ENCODE measurements at regions of chr19 and their contacts with region 1.

Region 1: DNA sequence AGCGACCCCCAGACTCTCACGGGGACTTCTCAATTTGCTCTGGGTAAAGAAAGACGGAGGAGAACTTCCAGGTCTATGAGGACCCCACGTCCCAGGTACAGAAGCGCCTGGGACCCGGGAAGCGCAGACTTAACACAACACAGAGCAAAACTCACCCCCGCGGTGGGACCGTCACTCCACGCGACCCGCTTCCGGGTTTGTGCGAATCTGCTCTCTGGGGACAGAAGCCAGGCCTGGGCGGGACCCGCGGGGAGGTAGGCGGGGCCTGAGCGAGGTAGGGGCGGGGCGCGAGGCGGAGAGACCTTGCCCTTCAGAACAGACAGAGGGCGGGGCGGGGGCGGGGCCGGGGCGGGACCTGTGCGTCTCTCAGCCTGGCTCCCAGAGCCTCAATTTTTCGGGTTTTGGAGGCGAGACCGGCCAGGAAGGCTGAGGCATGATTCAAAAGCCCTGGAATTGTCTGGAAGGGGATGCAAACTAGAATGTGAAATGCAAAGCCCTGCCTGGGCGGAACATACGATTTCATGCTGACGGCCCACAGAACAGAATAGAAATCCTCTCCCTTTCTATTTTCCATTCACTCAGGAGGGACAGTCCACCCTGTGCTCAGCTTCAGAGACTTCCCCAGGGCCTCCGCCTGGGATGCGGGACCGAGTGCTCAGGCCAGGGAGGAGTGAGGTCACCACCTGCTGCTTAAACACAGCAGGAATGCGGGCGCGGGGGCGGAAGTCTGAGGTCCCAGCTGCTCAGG is 19.3 kb upstream of the ZNF888 start:
- DNase-seq: peak; percentile 79
- H3K4me3 ChIP-seq: peak overlapping the region; percentile 67 to 86 (median 76)
- H3K27ac ChIP-seq: peak overlapping the region; percentile 58
- H3K4me1 ChIP-seq: peaks cover 10% of the 10 kb centered on the region
- H3K27me3 ChIP-seq: no peaks in the 10 kb centered on the region
- CTCF ChIP-seq: no peak

Region 2: GRCh38 chr19:52853880-52854279 is 88.7 kb before region 1 on chr19:
- CTCF ChIA-PET with region 1: no interaction called
- dilution Hi-C with region 1: no loop called
- in situ Hi-C with region 1: no loop called
- intact Hi-C with region 1: loop called (anchors 1 kb)
- DNase-seq: no peak
- H3K4me3 ChIP-seq: no peak overlapping the region
- H3K27ac ChIP-seq: no peak overlapping the region
- H3K4me1 ChIP-seq: peaks cover 3% of the 10 kb centered on the region
- H3K27me3 ChIP-seq: no peaks in the 10 kb centered on the region
- CTCF ChIP-seq: no peak

Region 3: GRCh38 chr19:52897144-52897935 is 45.2 kb before region 1 on chr19 and contains the start of gene ZNF320:
- CTCF ChIA-PET with region 1: no interaction called
- dilution Hi-C with region 1: no loop called
- in situ Hi-C with region 1: no loop called
- intact Hi-C with region 1: loop called (anchors 2 kb)
- DNase-seq: peak; percentile 88
- H3K4me3 ChIP-seq: peak within 1 kb of the TSS; percentile 62 to 95 (median 70)
- H3K27ac ChIP-seq: peak within 1 kb of the TSS; percentile 80
- H3K4me1 ChIP-seq: no peaks in the 10 kb centered on the region
- H3K27me3 ChIP-seq: no peaks in the 10 kb centered on the region
- CTCF ChIP-seq: no peak
- total RNA-seq, gene ZNF320: 13.3 to 18.5 TPM

Region 4: DNA sequence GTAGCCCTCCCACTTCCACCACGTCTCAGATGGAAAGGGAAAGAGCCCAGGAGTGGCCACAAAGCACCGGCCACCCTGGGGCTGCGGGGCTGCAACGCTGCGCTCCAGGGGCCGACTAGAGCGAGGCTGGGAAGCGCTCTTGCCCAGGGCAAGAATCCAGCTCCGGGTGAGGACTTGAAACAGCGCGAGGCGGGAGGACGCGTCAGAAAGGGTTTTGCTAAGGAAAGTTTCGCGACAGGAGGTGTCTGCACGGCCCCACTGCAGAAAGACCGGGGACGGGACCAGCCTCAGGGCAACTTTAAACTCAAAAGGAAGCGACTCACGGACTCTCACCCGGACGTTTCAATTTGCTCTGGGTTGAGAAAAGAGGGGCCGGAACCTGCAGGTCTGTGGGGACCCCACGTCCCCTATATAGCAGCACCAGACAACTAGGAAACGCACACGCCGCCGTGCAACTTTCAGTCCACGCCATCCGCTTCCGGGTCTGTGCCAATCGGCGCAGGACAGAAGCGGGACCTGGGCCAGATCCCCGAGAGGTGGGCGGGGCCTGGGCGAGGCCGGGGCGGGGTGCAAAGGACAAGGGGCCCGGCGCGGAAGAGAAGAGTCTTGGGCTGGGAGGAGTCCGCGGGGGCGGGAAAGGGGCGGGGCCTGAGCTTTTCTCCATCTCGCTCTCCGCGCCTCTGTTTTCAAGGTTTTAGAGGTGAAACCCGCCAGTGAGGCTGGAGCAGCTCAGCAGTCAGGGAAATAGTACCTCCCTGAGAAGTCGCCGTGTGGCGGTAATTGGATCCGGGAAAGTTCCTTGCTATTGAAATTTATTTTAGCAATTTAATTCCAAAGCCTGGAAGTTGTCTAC is 20.1 kb after region 1 on chr19 and contains the start of gene ZNF816:
- CTCF ChIA-PET with region 1: no interaction called
- dilution Hi-C with region 1: no loop called
- in situ Hi-C with region 1: no loop called
- intact Hi-C with region 1: loop called (anchors 1 kb)
- DNase-seq: peak; percentile 95
- H3K4me3 ChIP-seq: peak within 1 kb of the TSS; percentile 65 to 72 (median 71)
- H3K27ac ChIP-seq: peak within 1 kb of the TSS; percentile 50
- H3K4me1 ChIP-seq: peaks cover 8% of the 10 kb centered on the region
- H3K27me3 ChIP-seq: no peaks in the 10 kb centered on the region
- CTCF ChIP-seq: no peak
- total RNA-seq, gene ZNF816: 6.0 to 10.8 TPM

Region 5: DNA sequence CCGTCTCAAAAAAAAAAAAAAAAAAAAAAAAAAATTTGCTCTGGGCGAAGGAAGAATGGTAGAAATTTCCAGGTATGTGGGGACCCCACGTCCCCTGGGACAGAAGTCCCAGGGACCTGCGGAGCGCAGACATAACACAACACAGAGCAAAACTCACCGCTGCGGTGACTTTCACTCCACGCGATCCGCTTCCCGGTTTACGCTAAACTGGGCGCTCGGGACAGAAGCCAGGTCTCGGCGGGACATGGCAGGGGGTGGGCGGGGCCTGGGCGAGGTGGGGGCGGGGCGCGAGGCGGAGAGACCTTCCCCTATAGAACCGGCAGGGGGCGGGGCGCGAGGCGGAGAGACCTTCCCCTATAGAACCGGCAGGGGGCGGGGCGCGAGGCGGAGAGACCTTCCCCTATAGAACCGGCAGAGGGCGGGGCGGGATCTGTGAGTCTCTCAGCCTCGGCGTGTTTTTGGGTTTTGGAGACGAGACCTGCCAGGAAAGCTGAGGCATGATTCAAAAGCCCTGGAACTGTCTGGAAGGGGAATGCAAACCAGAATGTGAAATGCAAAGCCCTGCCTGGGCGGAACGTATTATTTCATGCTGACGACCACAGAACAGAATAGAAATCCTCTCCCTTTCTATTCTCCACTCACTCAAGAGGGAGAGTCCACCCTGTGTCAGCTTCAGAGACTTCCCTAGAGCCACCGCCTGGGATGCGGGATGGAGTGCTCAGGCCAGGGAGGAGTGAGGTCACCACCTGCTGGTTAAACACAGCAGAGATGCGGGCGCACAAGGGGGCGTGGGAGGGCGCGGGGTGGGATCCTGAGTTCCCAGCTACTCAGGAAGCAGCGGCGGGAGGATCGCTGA is 51.0 kb after region 1 on chr19:
- CTCF ChIA-PET with region 1: no interaction called
- dilution Hi-C with region 1: no loop called
- in situ Hi-C with region 1: no loop called
- intact Hi-C with region 1: loop called (anchors 5 kb)
- DNase-seq: peak; percentile 71
- H3K4me3 ChIP-seq: peak overlapping the region; percentile 42 to 47 (median 44)
- H3K27ac ChIP-seq: no peak overlapping the region
- H3K4me1 ChIP-seq: peaks cover 10% of the 10 kb centered on the region
- H3K27me3 ChIP-seq: no peaks in the 10 kb centered on the region
- CTCF ChIP-seq: peak in 1 of 2 donors; percentile 56

Measured in mammary epithelial cell (primary cell).